CD4-positive, alpha-beta T cell (primary cell): ENCODE measurements at regions of chr6 and their contacts with region 1.

Region 1: DNA sequence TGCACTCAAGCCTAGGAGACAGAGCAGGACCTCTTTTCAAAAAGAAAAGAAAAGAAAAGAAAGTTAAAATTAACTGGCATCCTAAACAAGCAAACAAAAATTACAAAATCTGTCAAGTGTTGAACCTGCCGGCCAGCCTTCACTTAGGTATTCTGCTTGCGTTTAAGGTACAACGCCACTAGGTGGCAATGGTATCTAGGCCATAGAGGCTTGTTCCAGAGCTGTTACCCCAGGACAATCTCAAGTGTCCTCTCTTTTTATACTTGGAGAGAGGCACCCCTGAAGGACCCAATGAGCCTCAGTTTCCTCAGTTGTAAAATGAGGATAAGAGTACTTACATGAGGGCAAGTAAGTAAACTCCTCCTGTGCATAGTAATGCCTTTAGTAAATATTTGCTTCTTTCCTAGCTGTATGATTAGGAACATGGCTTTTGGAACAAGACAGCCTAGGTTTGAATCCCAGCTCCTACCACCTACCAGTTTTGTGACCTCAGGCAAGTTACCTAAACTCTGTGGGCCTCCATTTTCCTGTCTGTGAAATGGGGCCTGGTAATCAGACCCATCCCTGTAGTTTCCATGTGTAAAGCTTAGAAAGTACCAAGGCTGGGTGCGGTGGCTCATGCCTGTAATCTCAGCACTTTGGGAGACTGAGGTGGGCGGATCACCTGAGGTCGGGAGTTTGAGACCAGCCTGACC is 5.8 kb upstream of the PACSIN1 start:
- DNase-seq: peak in 13 of 14 experiments; percentile 13 to 76 (median 41)
- ATAC-seq: peak; percentile 71
- H3K4me3 ChIP-seq: no peak overlapping the region
- H3K4me3 Mint-ChIP-seq: no peak overlapping the region
- H3K27ac ChIP-seq: no peak overlapping the region
- H3K27ac Mint-ChIP-seq: no peak overlapping the region
- H3K4me1 ChIP-seq: no peaks in the 10 kb centered on the region
- H3K4me1 Mint-ChIP-seq: peaks cover 1% of the 10 kb centered on the region
- H3K27me3 ChIP-seq: peaks cover under 1 to 3% of the 10 kb centered on the region in 2 experiments
- H3K27me3 Mint-ChIP-seq: peaks cover 22% of the 10 kb centered on the region
- CTCF ChIP-seq: peak; percentile 71

Region 2: DNA sequence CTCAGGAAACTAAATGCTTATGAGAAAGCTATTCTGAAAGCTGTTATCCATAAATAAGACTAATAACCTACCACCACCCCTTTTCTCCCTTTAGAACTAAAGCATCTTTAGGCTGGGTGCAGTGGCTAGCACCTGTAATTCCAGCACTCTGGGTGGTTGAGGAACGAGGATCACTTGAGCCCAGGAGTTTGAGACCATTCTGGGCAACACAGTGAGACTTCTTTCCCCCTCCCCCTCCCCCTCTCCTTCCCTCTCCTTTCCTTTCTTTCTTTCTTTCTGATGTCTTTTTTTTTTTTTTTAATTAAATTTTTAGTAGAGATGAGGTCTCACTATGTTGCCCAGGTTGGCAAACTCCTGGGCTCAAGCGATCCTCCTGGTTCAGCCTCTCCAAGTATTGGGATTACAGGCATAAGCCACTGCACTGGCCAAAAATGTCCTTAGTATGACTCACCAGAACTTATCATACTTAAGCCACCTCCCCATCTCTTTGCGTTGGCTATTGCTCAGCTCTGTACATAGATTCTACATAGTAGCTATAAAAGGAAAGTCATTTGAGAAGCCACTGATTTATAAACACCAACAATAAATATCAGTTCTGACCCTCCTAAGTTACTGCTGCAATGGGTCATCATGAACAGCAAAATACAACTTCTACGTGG is 150.9 kb after region 1 on chr6:
- CTCF ChIA-PET with region 1: interaction called, 37 read pairs
- POLR2A ChIA-PET with region 1: interaction called, 6 read pairs
- intact Hi-C with region 1: loop called (anchors 1 kb)
- DNase-seq: no peak
- ATAC-seq: no peak
- H3K4me3 ChIP-seq: no peak overlapping the region
- H3K4me3 Mint-ChIP-seq: no peak overlapping the region
- H3K27ac ChIP-seq: no peak overlapping the region
- H3K27ac Mint-ChIP-seq: no peak overlapping the region
- H3K4me1 ChIP-seq: peaks cover 2% of the 10 kb centered on the region
- H3K4me1 Mint-ChIP-seq: peaks cover 23% of the 10 kb centered on the region
- H3K27me3 ChIP-seq: no peaks in the 10 kb centered on the region
- H3K27me3 Mint-ChIP-seq: no peaks in the 10 kb centered on the region
- CTCF ChIP-seq: no peak

Region 3: GRCh38 chr6:35139908-35140655 is 680.0 kb after region 1 on chr6:
- CTCF ChIA-PET with region 1: interaction called, 10 read pairs
- POLR2A ChIA-PET with region 1: no interaction called
- intact Hi-C with region 1: loop called in 1 of 2 experiments (anchors 2 kb)
- DNase-seq: peak; percentile 8 to 80 (median 26)
- ATAC-seq: no peak
- H3K4me3 ChIP-seq: no peak overlapping the region
- H3K4me3 Mint-ChIP-seq: peak overlapping the region; percentile 32
- H3K27ac ChIP-seq: no peak overlapping the region
- H3K27ac Mint-ChIP-seq: no peak overlapping the region
- H3K4me1 ChIP-seq: peaks cover 16% of the 10 kb centered on the region
- H3K4me1 Mint-ChIP-seq: peaks cover 11% of the 10 kb centered on the region
- H3K27me3 ChIP-seq: peaks cover 11% of the 10 kb centered on the region in 2 experiments
- H3K27me3 Mint-ChIP-seq: peaks cover 21% of the 10 kb centered on the region
- CTCF ChIP-seq: peak; percentile 85

Region 4: GRCh38 chr6:35202066-35202546 is 742.1 kb after region 1 on chr6:
- CTCF ChIA-PET with region 1: no interaction called
- POLR2A ChIA-PET with region 1: no interaction called
- intact Hi-C with region 1: loop called (anchors 1 to 10 kb)
- DNase-seq: no peak
- ATAC-seq: no peak
- H3K4me3 ChIP-seq: no peak overlapping the region
- H3K4me3 Mint-ChIP-seq: no peak overlapping the region
- H3K27ac ChIP-seq: no peak overlapping the region
- H3K27ac Mint-ChIP-seq: no peak overlapping the region
- H3K4me1 ChIP-seq: no peaks in the 10 kb centered on the region
- H3K4me1 Mint-ChIP-seq: no peaks in the 10 kb centered on the region
- H3K27me3 ChIP-seq: peaks cover 26 to 29% of the 10 kb centered on the region in 2 experiments
- H3K27me3 Mint-ChIP-seq: peaks cover 66% of the 10 kb centered on the region
- CTCF ChIP-seq: no peak